Endothelial cell of umbilical vein (primary cell): ENCODE measurements at regions of chr10 and their contacts with region 1.

Region 1: DNA sequence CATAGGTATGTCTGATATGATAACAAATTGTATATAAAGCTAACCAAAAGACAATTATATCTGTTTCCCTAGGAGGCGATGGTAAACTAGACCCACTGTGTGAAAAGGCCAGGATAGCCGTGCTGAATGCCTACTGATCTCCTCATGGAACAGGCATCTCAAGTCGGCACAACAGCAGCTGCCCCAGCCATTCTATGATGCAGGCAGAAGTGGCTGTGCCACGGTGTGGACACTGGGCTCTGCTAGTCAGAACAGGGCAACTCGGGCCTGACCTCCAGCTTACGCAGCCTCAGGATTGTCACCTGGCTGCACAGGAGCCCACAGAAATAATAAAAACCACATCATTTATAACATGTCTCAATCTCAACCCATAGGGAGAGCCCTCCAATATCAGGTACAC is 15.0 kb downstream of the C10orf53 start:
- DNase-seq: no peak
- H3K4me3 ChIP-seq: no peak overlapping the region
- H3K27ac ChIP-seq: no peak overlapping the region
- H3K4me1 ChIP-seq: no peaks in the 10 kb centered on the region
- H3K27me3 ChIP-seq: peaks cover 19 to 37% of the 10 kb centered on the region in 2 experiments
- CTCF ChIP-seq: no peak
- POLR2A ChIP-seq: no peak

Region 2: DNA sequence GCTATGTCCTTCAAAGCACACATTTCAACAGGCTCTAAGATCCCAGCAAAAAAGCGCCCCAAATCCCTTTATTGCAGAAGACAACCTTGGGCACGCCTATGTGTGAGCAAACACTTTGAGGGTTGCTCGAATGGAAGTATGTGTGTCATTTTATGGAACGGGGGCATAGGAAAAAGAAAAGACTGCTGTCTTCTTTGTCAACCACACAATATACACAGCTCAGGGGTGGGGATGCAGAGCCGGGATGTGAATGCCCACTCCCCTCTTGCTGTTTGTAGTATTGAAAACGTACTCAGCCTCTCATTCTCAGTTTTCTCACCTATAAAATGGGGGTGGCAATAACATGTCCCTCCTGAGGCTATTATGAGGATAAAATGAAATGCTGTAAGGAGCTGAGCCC is 17.1 kb after region 1 on chr10:
- CTCF ChIA-PET with region 1: interaction called, 3 read pairs
- POLR2A ChIA-PET with region 1: no interaction called
- dilution Hi-C with region 1: no loop called
- intact Hi-C with region 1: loop called (anchors 1 kb)
- DNase-seq: no peak
- H3K4me3 ChIP-seq: no peak overlapping the region
- H3K27ac ChIP-seq: no peak overlapping the region
- H3K4me1 ChIP-seq: no peaks in the 10 kb centered on the region
- H3K27me3 ChIP-seq: no peaks in the 10 kb centered on the region
- CTCF ChIP-seq: no peak
- POLR2A ChIP-seq: no peak